ENCODE measurements at regions of chr5 and their contacts with region 1.

Region 1: DNA sequence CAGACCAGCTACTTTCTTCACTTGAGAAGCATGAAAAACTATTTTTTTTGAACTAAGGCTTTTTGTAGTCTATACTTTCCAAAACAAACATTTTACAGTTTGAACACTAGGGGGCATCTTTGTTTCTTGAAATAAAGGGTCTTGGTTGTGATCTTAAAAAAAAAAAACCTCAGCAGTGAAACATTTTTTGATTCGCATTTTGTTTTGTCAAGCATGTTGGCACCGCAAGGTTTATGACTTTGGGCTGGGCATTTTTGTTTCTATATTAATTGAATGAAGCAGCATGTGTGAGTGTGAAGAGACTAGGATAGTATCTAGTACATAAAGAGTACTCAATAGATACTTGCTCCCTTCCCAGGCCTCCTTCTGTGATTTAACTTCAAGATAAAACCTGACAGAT is 31.6 kb upstream of the ACOT12 start:
- DNase-seq: no peak
- ATAC-seq: peak; percentile 72

Region 2: GRCh38 chr5:81486711-81487110 is 61.1 kb after region 1 on chr5:
- intact Hi-C with region 1: no loop called
- DNase-seq: no peak
- ATAC-seq: no peak

Region 3: DNA sequence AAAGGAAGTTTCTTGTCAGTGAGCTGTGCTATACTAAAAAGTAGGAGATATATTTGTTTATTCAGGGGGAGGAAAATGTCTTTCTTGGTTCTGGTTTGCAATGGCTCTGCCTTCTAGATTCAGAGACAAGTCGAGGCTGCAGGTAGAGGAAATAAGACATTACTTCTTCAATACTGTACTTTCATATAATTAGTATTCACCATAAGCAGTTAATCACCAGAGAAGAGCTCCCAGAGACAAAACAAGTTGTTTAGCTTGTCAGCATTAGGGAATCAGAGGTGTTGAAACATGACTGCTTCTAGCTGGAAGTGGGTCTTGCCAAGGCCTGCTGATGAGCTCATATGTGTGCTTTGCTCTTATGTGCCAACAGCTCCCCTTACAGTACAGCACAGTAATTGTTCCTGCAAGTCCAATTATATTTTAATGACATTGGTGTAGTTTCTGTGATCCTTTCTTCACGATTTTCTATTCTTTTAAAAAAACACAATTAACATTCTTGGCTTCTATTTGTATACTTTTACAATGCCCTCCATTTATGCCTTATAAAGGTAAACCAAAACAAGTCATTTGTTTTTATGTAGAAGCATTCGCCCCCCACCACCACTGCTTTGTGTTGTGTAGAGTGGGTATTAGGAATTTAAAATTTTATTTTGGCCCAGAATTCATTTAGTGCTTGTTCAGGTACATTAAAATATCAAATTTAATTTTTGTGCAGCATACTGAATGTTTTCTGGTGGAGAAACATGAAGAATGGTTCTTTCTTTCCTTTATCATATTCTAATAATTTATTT is 740.4 kb after region 1 on chr5:
- intact Hi-C with region 1: loop called (anchors 5 kb)
- DNase-seq: peak; percentile 67
- ATAC-seq: peak; percentile 100

Region 4: GRCh38 chr5:82225525-82226172 is 800.1 kb after region 1 on chr5:
- intact Hi-C with region 1: loop called (anchors 10 kb)
- DNase-seq: peak; percentile 34
- ATAC-seq: peak; percentile 81